Sigmoid colon (tissue), 7 donors: ENCODE measurements at regions of chr11 and their contacts with region 1.

Region 1: DNA sequence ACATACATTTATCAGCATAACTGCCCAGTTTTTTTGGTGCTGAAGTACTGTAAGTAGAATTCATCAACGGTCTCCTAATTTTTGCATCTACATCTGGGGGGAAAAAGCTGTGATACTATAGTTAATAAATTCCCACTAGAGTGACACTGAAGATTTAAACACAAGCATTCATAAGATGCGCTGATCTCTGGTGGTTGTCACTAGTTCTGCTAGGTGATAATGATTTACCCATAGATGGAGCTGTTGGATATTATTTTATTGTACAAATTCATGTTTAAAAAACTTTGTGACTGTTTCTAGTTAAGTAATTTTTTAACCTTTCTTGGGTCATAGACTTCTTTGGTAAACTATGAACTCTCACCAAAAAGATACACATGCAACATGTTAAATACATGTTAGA is 106.6 kb downstream of the EMSY start:
- DNase-seq: no peak
- H3K4me3 ChIP-seq: no peak overlapping the region
- H3K27ac ChIP-seq: no peak overlapping the region
- H3K4me1 ChIP-seq: peaks cover 0 to 7% (median 0%) of the 10 kb centered on the region in 4 donors
- H3K27me3 ChIP-seq: no peaks in the 10 kb centered on the region
- CTCF ChIP-seq: no peak
- EP300 ChIP-seq: no peak
- POLR2A ChIP-seq: no peak

Region 2: GRCh38 chr11:76680518-76681425 is 129.4 kb after region 1 on chr11:
- intact Hi-C with region 1: loop called (anchors 1 kb)
- DNase-seq: peak; percentile 86
- H3K4me3 ChIP-seq: no peak overlapping the region
- H3K27ac ChIP-seq: no peak overlapping the region
- H3K4me1 ChIP-seq: peaks cover 0 to 15% (median 11%) of the 10 kb centered on the region in 4 donors
- H3K27me3 ChIP-seq: no peaks in the 10 kb centered on the region
- CTCF ChIP-seq: peak; percentile 73 to 84 (median 76)
- EP300 ChIP-seq: no peak
- POLR2A ChIP-seq: no peak